BJ (cell line): ENCODE measurements at regions of chr11 and their contacts with region 1.

Region 1: DNA sequence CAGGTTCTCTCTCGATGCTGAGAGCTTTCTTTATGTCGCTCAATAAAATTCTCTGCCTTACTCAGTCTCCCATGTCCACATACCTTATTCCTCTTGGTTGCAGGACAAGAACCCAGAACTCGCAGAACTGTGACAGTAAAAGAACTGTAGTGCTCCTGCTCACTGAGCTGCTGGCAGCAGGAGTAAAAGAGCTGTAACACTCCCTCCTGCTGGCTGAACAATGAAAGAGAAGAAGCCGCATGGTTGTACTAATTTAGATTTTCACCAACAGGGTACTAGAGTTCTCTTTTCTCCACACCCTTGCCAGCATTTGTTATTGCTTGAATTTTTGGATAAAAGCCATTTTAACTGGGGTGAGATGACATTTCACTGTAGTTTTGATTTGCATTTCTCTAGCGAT is 433.2 kb downstream of the GUCY1A2 start:
- DNase-seq: no peak
- H3K4me3 ChIP-seq: no peak overlapping the region
- H3K27me3 ChIP-seq: no peaks in the 10 kb centered on the region
- CTCF ChIP-seq: peak; percentile 70

Region 2: GRCh38 chr11:106156290-106156937 is 428.6 kb before region 1 on chr11:
- CTCF ChIA-PET with region 1: interaction called, 11 read pairs
- POLR2A ChIA-PET with region 1: no interaction called
- DNase-seq: peak; percentile 21
- H3K4me3 ChIP-seq: no peak overlapping the region
- H3K27me3 ChIP-seq: no peaks in the 10 kb centered on the region
- CTCF ChIP-seq: peak; percentile 55

Region 3: DNA sequence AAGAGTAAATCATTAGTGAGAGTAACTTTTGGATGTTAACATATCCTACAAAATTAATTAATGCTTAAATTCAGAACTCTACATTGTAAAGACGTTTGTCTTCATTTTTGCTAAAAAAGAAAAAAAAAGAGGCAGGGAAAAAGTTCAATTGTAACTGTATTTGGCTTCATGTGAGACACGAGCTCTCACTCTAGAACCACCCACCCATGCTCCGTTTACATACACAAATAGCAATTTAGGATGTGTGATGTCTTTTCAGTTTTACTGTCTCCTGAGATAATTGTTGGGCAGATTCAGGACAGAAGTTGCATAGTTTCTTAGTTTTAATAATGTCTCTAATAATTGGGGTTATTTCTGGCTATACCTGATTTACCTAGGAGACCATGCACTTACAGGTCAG is 259.0 kb before region 1 on chr11:
- CTCF ChIA-PET with region 1: interaction called, 25 read pairs
- POLR2A ChIA-PET with region 1: no interaction called
- DNase-seq: no peak
- H3K4me3 ChIP-seq: no peak overlapping the region
- H3K27me3 ChIP-seq: no peaks in the 10 kb centered on the region
- CTCF ChIP-seq: no peak

Region 4: DNA sequence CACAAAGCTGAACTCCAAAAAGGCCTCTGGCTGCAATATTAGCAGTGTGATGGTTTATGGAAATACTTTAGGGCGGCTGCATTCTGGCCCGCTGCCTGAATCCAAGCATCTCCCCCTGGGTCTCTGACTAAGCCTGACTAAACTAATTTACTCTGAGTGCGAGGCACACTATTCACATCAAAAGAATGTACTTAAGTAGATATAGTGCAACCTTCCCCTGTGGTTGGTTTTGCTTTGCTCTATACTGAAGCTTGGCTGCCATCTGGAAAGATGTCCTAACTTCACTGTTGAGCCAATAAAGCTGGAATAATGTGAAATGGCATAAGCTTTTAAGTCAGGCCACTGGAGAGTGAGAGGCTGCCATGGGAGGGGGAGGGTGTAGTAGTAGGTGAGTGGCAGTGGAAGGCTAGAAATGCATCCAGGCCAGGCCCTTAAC is 186.0 kb before region 1 on chr11:
- CTCF ChIA-PET with region 1: no interaction called
- POLR2A ChIA-PET with region 1: no interaction called
- DNase-seq: peak; percentile 99
- H3K4me3 ChIP-seq: no peak overlapping the region
- H3K27me3 ChIP-seq: no peaks in the 10 kb centered on the region
- CTCF ChIP-seq: no peak

Region 5: DNA sequence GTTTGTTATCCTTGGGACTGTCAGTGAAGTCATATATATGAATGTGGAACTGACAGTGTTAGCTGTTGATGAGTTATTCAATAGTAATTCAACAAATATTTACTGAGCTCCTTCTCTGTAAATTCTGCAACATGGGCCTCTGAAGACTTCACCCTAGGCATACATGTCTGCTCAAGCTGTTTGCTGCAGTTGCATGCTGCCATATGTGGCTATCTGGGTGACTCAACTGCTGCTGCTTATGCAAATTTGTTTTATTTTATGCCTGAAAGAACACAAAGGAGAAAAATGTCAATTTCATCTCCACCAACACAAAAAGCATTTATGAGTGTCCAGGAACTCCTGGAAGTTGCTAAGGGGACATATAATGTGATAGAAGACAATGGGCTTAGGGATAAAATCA is 90.0 kb before region 1 on chr11:
- CTCF ChIA-PET with region 1: no interaction called
- POLR2A ChIA-PET with region 1: no interaction called
- DNase-seq: no peak
- H3K4me3 ChIP-seq: no peak overlapping the region
- H3K27me3 ChIP-seq: no peaks in the 10 kb centered on the region
- CTCF ChIP-seq: no peak

Region 6: DNA sequence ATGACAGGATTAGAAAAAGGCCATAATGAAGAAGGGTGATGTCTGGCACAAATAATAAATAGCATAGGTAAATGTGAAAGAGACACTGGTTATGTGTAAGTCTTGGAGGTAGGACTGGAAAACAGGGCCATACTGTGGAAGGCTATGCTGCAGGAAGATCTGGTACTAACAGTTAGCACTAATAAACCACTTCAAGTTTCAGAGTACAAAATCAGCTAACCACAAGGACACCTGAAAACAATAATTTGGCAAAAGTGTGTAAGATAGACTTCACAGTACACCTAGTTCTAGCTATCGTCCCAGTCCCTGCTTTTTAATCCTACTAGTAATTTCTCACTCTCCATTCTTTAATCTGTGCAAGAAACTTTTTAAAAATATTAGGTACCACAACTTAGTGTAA is 828.3 kb after region 1 on chr11:
- CTCF ChIA-PET with region 1: no interaction called
- POLR2A ChIA-PET with region 1: no interaction called
- DNase-seq: no peak
- H3K4me3 ChIP-seq: no peak overlapping the region
- H3K27me3 ChIP-seq: no peaks in the 10 kb centered on the region
- CTCF ChIP-seq: no peak